ENCODE measurements at regions of chr16 and their contacts with region 1.

Region 1: DNA sequence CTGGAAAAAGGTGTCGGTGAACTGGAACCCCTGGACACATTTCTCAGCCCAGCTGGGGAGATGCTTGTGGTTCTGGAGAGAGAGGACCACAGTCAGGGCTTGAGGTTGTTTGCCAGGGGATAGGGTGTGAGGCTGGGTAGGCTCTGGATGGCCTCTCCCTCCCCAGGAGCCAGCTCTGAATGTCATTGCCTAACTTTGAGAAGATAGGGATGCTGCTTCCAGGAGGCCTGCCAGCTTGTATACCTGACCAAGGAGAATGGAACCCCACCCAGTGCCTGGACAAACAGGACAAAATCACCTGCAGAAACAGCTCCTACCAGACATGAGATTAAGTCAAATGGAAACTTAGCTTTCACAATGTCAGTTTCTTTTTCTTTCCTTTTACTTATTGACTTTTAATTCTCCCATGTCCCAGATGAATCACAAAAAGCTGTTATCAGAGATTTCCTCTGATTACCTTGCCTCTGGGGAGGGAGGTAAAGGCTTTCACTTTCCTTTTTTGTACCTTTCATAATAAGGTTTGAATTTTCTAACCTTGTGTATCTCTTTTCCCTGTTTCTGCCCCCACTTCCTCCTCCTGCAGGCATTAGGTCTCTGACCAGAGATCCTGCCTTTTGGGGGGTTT is 29.8 kb upstream of the PLLP start:
- DNase-seq: no peak
- H3K4me3 Mint-ChIP-seq: no peak overlapping the region
- H3K27ac Mint-ChIP-seq: no peak overlapping the region
- H3K4me1 Mint-ChIP-seq: peaks cover 18% of the 10 kb centered on the region
- H3K27me3 Mint-ChIP-seq: peaks cover 1% of the 10 kb centered on the region

Region 2: DNA sequence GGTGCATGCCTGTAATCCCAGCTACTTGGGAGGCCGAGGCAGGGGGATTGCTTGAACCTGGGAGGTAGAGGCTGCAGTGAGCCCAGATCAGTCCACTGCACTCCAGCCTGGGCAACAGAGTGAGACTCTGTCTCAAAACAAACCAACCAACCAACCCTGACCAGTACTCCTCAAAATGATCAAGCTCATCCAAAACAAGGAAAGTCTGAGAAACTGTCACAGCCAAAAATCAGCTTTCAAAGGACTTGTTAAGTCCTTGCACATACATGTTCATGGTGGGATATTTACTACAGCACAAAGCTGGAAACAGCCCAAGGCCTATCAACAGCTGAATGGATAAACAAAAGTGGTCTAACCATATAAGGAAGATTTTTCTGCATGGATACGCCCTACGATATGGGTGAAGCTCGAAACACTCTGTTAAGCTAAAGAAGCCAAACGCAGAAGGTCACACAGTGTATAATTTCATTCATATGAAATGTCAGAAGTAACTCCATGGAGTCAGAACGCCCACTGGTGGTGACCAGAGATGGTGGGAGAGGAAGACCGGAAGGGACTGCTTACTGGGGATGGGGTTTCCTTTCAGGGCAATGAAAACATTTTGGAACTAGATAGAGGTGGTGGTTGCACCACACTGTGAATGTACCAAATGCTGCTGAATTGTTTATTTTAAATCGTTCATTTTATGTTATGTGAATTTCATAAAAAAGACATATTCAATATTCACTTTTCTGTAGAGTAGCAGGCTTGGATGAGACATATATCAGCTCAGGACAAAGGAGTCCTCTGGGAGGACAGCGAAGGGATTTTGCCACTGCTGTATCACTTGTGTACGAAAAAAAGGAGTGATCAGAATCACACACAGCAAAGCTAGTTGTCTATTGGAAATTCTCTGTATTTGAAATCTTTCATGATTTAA is 108.0 kb after region 1 on chr16:
- CTCF ChIA-PET with region 1: interaction called, 12 read pairs
- POLR2A ChIA-PET with region 1: no interaction called
- intact Hi-C with region 1: no loop called
- DNase-seq: no peak
- H3K4me3 Mint-ChIP-seq: no peak overlapping the region
- H3K27ac Mint-ChIP-seq: no peak overlapping the region
- H3K4me1 Mint-ChIP-seq: peaks cover 6% of the 10 kb centered on the region
- H3K27me3 Mint-ChIP-seq: no peaks in the 10 kb centered on the region

Measured in activated CD4-positive, alpha-beta memory T cell treated with anti-CD3 and anti-CD28 coated beads for 36 hours (primary cell).